ENCODE measurements at regions of chr10 and their contacts with region 1.

Region 1: GRCh38 chr10:97499561-97500296 is 1.0 kb downstream of the UBTD1 start:
- DNase-seq: peak; percentile 84 to 90
- ATAC-seq: no peak
- H3K4me3 ChIP-seq: peak overlapping the region; percentile 84
- H3K27ac ChIP-seq: peak overlapping the region; percentile 96
- H3K4me1 ChIP-seq: peaks cover 54% of the 10 kb centered on the region
- H3K27me3 ChIP-seq: no peaks in the 10 kb centered on the region
- CTCF ChIP-seq: no peak

Region 2: DNA sequence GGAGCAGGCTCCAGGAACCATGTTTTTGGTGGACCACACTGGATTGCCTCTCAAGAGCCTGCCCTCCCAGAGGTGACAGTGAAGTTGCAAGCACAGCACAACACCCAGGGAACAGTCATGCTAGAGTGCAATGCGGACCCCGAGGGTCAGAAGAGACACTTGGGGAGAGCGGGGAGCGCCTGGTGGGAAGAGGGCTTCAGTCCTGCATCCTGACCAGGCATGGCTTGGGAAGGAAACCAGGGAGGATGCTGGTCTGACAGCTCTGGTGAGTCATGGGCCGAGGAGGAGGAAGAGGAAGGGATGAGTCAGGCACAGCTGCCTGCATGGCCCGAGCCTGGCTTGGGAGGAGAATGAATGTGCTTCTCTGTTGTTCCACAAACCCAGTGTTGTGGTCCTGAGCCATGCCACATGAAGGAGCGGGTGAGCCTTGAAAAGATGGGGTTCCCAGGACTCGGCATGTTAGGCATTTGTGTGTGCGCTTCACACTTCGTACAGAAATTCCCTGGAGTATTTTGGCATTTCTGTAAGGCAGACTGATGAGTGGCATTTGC is 43.4 kb after region 1 on chr10:
- intact Hi-C with region 1: loop called in 1 of 2 experiments (anchors 5 kb)
- DNase-seq: peak; percentile 87 to 89
- ATAC-seq: peak; percentile 89 to 94 (median 89)
- H3K4me3 ChIP-seq: no peak overlapping the region
- H3K27ac ChIP-seq: peak overlapping the region; percentile 93
- H3K4me1 ChIP-seq: peaks cover 62% of the 10 kb centered on the region
- H3K27me3 ChIP-seq: no peaks in the 10 kb centered on the region
- CTCF ChIP-seq: no peak

Region 3: DNA sequence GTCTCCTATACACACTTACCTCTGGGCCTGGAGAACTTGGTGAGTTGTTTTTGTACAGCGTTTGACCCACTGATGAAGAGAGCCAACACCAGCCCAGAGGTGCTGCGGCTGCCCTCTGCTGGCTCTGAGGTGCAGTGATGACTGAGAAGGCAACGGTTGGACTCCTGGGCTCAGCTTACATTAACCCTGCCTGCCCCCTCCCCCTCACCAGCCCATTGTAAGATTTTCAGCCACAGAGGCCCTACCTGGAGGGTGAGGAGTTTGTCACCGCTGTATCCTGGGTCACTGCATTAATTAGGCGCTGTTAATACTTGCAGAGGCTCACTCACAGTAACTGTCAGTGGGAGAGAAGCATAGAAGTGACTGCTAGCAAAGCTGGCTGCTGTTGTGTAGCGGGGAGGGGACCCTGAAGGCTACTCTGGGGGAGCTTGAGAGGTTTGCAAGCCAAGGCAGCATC is 53.9 kb after region 1 on chr10:
- intact Hi-C with region 1: loop called in 1 of 2 experiments (anchors 5 kb)
- DNase-seq: peak; percentile 72 to 88
- ATAC-seq: peak; percentile 73 to 93 (median 91)
- H3K4me3 ChIP-seq: no peak overlapping the region
- H3K27ac ChIP-seq: no peak overlapping the region
- H3K4me1 ChIP-seq: peaks cover 45% of the 10 kb centered on the region
- H3K27me3 ChIP-seq: no peaks in the 10 kb centered on the region
- CTCF ChIP-seq: peak; percentile 80

Measured in psoas muscle (tissue), 8 donors.